ENCODE measurements at regions of chr4 and their contacts with region 1.

Region 1: GRCh38 chr4:85747882-85748491 is 273.0 kb downstream of the ARHGAP24 start:
- DNase-seq: peak in 3 of 5 donors; percentile 25 to 37 (median 33)
- ATAC-seq: peak; percentile 81 to 85 (median 83)
- H3K4me3 ChIP-seq: no peak overlapping the region
- H3K27ac ChIP-seq: peak overlapping the region in 1 of 12 donors; percentile 3
- H3K4me1 ChIP-seq: peaks cover 0 to 45% (median 6%) of the 10 kb centered on the region in 12 donors
- H3K27me3 ChIP-seq: no peaks in the 10 kb centered on the region
- CTCF ChIP-seq: peak; percentile 80 to 93 (median 87)
- POLR2A ChIP-seq: no peak

Region 2: DNA sequence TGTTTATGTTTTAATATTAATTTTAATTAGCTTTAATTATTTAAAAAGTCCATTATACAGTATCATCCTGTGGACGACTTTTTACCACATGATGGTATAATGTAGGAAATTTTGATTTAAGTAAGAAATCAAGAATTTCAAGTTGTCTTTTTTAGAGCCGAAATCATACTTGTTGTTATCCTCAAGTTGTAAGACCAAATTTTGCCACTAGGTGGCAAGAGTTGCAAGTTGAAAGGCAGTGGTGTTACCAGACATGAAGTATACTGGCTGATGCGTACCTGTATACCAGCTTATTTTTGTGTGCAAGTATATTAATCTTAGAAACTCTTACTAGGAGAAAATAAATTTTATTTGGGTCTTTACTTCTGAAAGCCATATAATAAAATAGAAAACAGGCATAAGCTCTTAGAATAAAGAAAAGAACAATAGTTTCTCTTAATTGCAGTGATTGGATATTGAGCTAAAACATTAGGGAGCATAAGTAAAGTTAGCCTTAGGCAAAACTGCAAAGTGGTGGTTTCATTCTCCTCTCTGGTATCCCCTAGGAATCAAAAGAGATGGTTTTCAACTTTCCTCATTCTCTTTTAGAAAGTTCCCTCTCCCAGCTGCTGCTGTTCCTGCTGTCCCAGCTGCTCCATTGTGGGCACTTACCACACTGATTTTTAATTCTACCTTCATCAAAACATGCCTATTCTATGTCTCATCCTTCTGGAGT is 663.5 kb before region 1 on chr4:
- intact Hi-C with region 1: loop called in 8 of 10 experiments (anchors 2 to 10 kb)
- DNase-seq: peak in 2 of 5 donors; percentile 25 to 36
- ATAC-seq: peak in 2 of 4 donors; percentile 63 to 75
- H3K4me3 ChIP-seq: no peak overlapping the region
- H3K27ac ChIP-seq: no peak overlapping the region
- H3K4me1 ChIP-seq: peaks cover 0 to 5% (median 0%) of the 10 kb centered on the region in 12 donors
- H3K27me3 ChIP-seq: no peaks in the 10 kb centered on the region
- CTCF ChIP-seq: peak; percentile 58 to 87 (median 74)
- POLR2A ChIP-seq: no peak

Region 3: GRCh38 chr4:85147439-85148076 is 600.4 kb before region 1 on chr4:
- intact Hi-C with region 1: loop called (anchors 1 to 5 kb)
- DNase-seq: peak; percentile 49 to 72 (median 58)
- ATAC-seq: peak; percentile 59 to 77 (median 76)
- H3K4me3 ChIP-seq: peak overlapping the region in 8 of 12 donors; percentile 10 to 45 (median 34)
- H3K27ac ChIP-seq: peak overlapping the region in 3 of 12 donors; percentile 4 to 36 (median 23)
- H3K4me1 ChIP-seq: peaks cover 0 to 21% (median 4%) of the 10 kb centered on the region in 12 donors
- H3K27me3 ChIP-seq: no peaks in the 10 kb centered on the region
- CTCF ChIP-seq: peak; percentile 50 to 80 (median 72)
- POLR2A ChIP-seq: no peak

Region 4: GRCh38 chr4:85474818-85475630 is 273.0 kb before region 1 on chr4 and contains the start of gene ARHGAP24:
- intact Hi-C with region 1: loop called in 6 of 10 experiments (anchors 5 to 10 kb)
- DNase-seq: peak; percentile 83 to 92 (median 90)
- ATAC-seq: peak; percentile 96 to 98 (median 98)
- H3K4me3 ChIP-seq: peak within 1 kb of the TSS; percentile 2 to 85 (median 71)
- H3K27ac ChIP-seq: peak within 1 kb of the TSS; percentile 47 to 90 (median 80)
- H3K4me1 ChIP-seq: peaks cover 0 to 28% (median 7%) of the 10 kb centered on the region in 12 donors
- H3K27me3 ChIP-seq: no peaks in the 10 kb centered on the region
- CTCF ChIP-seq: peak in 1 of 12 donors; percentile 13
- POLR2A ChIP-seq: peak in 1 of 2 donors; percentile 23
- total RNA-seq, gene ARHGAP24: 14.9 to 36.9 (median 25.1) TPM

Region 5: GRCh38 chr4:85591406-85592098 is 156.4 kb before region 1 on chr4:
- intact Hi-C with region 1: loop called in 2 of 10 experiments (anchors 5 to 10 kb)
- DNase-seq: no peak
- ATAC-seq: no peak
- H3K4me3 ChIP-seq: no peak overlapping the region
- H3K27ac ChIP-seq: no peak overlapping the region
- H3K4me1 ChIP-seq: peaks cover 0 to 18% (median 5%) of the 10 kb centered on the region in 12 donors
- H3K27me3 ChIP-seq: no peaks in the 10 kb centered on the region
- CTCF ChIP-seq: no peak
- POLR2A ChIP-seq: no peak

Region 6: DNA sequence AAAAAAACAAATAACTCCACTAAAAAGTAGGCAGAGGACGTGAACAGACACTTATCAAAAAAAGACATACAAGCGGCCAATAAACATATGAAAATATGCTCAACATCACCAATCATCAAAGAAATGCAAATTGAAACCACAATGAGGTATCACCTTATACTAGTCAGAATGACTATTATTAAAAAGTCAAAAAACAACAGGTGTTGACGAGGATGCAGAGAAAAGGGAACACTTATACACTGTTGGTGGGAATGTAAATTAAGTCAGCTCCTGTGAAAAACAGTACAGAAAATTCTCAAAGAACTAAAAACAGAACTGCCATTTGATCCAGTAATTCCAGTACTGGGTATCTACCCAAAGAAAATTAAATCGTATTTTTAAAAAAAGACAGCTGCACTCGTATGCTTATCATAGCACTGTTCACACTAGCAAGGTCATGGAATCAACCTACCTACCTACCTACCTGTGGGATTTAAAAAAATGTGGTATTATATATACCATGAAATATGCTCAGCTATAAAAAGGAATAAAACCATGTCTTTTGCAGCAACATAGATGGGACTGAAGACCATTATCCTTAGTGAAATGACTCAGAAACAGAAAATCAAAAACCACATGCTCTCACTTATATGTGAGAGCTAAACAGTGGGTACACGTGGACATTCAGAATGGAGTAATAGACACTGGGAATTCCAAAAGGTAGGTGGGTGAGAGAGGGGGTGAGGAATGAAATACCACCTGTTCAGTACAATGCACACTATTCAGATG is 821.3 kb after region 1 on chr4:
- intact Hi-C with region 1: no loop called
- DNase-seq: no peak
- ATAC-seq: no peak
- H3K4me3 ChIP-seq: no peak overlapping the region
- H3K27ac ChIP-seq: no peak overlapping the region
- H3K4me1 ChIP-seq: no peaks in the 10 kb centered on the region
- H3K27me3 ChIP-seq: no peaks in the 10 kb centered on the region
- CTCF ChIP-seq: no peak
- POLR2A ChIP-seq: no peak

Measured in heart left ventricle (tissue), 16 donors.